CD14-positive monocyte (primary cell): ENCODE measurements at regions of chr16 and their contacts with region 1.

Region 1: DNA sequence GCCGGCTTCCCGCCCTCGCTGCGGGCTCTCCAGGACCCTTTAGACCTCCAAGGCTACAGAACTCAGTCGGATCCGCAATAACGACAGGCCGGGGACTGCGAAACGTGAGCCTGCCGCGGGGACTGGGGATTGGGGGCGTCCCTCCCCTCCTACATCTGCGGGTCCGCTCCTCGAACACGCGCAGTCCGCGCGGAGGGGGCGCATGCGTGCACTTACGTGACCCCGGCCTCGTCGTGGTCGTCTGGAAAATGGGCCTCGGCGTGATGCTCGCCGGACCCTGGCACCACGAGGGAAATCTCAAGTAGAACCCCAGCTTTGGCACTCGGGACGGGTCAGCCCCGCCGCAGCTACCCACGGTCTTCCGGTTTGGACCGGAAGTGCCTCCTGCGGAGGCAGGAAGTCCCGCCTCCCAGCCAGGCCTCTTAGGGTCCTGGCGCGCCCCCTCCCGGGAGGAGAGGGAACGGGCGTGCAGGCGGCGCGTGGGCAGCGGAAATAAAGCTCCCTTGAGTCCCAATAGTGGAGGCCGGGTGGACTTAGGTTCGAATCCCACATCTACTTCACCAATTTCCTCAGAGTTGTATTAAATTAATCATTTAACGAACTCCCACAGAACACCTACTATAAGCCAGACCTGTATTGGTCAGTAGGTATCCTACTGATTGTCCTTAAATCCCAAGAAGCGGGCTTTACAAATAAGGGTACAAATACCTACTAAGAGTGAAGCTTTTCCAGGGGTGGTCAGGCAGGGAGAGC is at the start of gene TAF1C:
- DNase-seq: peak; percentile 94 to 95 (median 95)
- H3K4me3 ChIP-seq: peak within 1 kb of the TSS; percentile 67 to 97 (median 92)
- H3K4me3 Mint-ChIP-seq: peak within 1 kb of the TSS; percentile 89 to 93
- H3K27ac ChIP-seq: peak within 1 kb of the TSS; percentile 55 to 90
- H3K27ac Mint-ChIP-seq: peak within 1 kb of the TSS; percentile 88 to 96 (median 91)
- H3K4me1 ChIP-seq: peaks cover 7 to 11% of the 10 kb centered on the region in 2 donors
- H3K4me1 Mint-ChIP-seq: peaks cover 13% of the 10 kb centered on the region
- H3K27me3 ChIP-seq: no peaks in the 10 kb centered on the region
- H3K27me3 Mint-ChIP-seq: peaks cover 0 to 1% (median 0%) of the 10 kb centered on the region in 3 donors
- CTCF ChIP-seq: peak; percentile 94
- polyA plus RNA-seq, gene TAF1C: 4.0 to 126 (median 4.5) TPM

Region 2: GRCh38 chr16:83967806-83968305 is 219.0 kb before region 1 on chr16 and contains the start of gene NECAB2:
- intact Hi-C with region 1: loop called (anchors 2 to 5 kb)
- DNase-seq: peak; percentile 43 to 64 (median 48)
- H3K4me3 ChIP-seq: no peak within 1 kb of the TSS
- H3K4me3 Mint-ChIP-seq: peak within 1 kb of the TSS; percentile 53 to 82
- H3K27ac ChIP-seq: no peak within 1 kb of the TSS
- H3K27ac Mint-ChIP-seq: peak within 1 kb of the TSS in 1 of 7 donors; percentile 3
- H3K4me1 ChIP-seq: no peaks in the 10 kb centered on the region
- H3K4me1 Mint-ChIP-seq: peaks cover 2% of the 10 kb centered on the region
- H3K27me3 ChIP-seq: peaks cover 6 to 32% of the 10 kb centered on the region in 2 donors
- H3K27me3 Mint-ChIP-seq: peaks cover 28 to 52% (median 40%) of the 10 kb centered on the region in 3 donors
- CTCF ChIP-seq: peak; percentile 78
- polyA plus RNA-seq, gene NECAB2: 0.33 to 1.4 (median 0.52) TPM

Region 3: GRCh38 chr16:84062734-84063640 is 123.9 kb before region 1 on chr16:
- intact Hi-C with region 1: loop called (anchors 5 kb)
- DNase-seq: peak; percentile 51 to 74 (median 51)
- H3K4me3 ChIP-seq: no peak overlapping the region
- H3K4me3 Mint-ChIP-seq: no peak overlapping the region
- H3K27ac ChIP-seq: no peak overlapping the region
- H3K27ac Mint-ChIP-seq: peak overlapping the region in 2 of 7 donors; percentile 46 to 56
- H3K4me1 ChIP-seq: peaks cover under 1 to 3% of the 10 kb centered on the region in 2 donors
- H3K4me1 Mint-ChIP-seq: peaks cover under 1% of the 10 kb centered on the region
- H3K27me3 ChIP-seq: no peaks in the 10 kb centered on the region
- H3K27me3 Mint-ChIP-seq: peaks cover 0 to 1% (median 0%) of the 10 kb centered on the region in 3 donors
- CTCF ChIP-seq: peak; percentile 83

Region 4: GRCh38 chr16:84084570-84085270 is 102.1 kb before region 1 on chr16:
- intact Hi-C with region 1: loop called in 1 of 2 experiments (anchors 5 kb)
- DNase-seq: peak in 2 of 3 donors; percentile 48 to 63
- H3K4me3 ChIP-seq: no peak overlapping the region
- H3K4me3 Mint-ChIP-seq: no peak overlapping the region
- H3K27ac ChIP-seq: peak overlapping the region; percentile 6 to 42
- H3K27ac Mint-ChIP-seq: peak overlapping the region in 3 of 7 donors; percentile 7 to 70 (median 57)
- H3K4me1 ChIP-seq: peaks cover 60 to 67% of the 10 kb centered on the region in 2 donors
- H3K4me1 Mint-ChIP-seq: peaks cover 68% of the 10 kb centered on the region
- H3K27me3 ChIP-seq: no peaks in the 10 kb centered on the region
- H3K27me3 Mint-ChIP-seq: peaks cover 0 to 3% (median 0%) of the 10 kb centered on the region in 3 donors
- CTCF ChIP-seq: peak; percentile 77

Region 5: GRCh38 chr16:84144859-84145639 is 41.8 kb before region 1 on chr16 and contains the starts of genes DNAAF1 and HSDL1:
- intact Hi-C with region 1: loop called (anchors 5 to 10 kb)
- DNase-seq: peak; percentile 83 to 90 (median 83)
- H3K4me3 ChIP-seq: peak within 1 kb of the TSS; percentile 73 to 91 (median 86)
- H3K4me3 Mint-ChIP-seq: peak within 1 kb of the TSS; percentile 90 to 98
- H3K27ac ChIP-seq: peak within 1 kb of the TSS; percentile 25 to 84
- H3K27ac Mint-ChIP-seq: peak within 1 kb of the TSS; percentile 73 to 91 (median 85)
- H3K4me1 ChIP-seq: peaks cover 13 to 16% of the 10 kb centered on the region in 2 donors
- H3K4me1 Mint-ChIP-seq: peaks cover 5% of the 10 kb centered on the region
- H3K27me3 ChIP-seq: peaks cover 0 to 20% of the 10 kb centered on the region in 2 donors
- H3K27me3 Mint-ChIP-seq: peaks cover 9 to 36% (median 22%) of the 10 kb centered on the region in 3 donors
- CTCF ChIP-seq: no peak
- polyA plus RNA-seq, gene DNAAF1: 0.23 to 14.6 TPM in 2 of 3 donors, not detected in the other
- polyA plus RNA-seq, gene HSDL1: 7.3 to 13.3 (median 8.0) TPM

Region 6: DNA sequence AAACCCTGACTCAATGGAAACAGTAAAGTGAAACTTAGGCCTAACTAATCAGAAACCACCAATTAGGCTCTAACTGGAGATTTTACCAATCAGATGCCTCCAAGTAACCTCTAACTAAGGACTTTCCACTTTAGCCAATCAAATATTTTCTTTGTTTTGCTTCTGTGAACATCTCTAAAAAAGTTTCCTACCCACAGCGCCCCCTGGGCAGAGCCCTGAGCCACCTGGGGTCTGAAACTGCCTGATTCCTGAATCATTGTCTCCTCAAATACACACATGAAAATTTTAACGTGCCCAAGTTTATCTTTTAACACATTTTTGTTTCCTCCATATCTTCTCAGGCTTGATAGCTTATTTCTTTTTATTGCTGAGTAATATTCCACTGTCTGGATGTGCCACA is 23.1 kb after region 1 on chr16:
- intact Hi-C with region 1: no loop called
- DNase-seq: no peak
- H3K4me3 ChIP-seq: no peak overlapping the region
- H3K4me3 Mint-ChIP-seq: no peak overlapping the region
- H3K27ac ChIP-seq: no peak overlapping the region
- H3K27ac Mint-ChIP-seq: no peak overlapping the region
- H3K4me1 ChIP-seq: no peaks in the 10 kb centered on the region
- H3K4me1 Mint-ChIP-seq: peaks cover 6% of the 10 kb centered on the region
- H3K27me3 ChIP-seq: no peaks in the 10 kb centered on the region
- H3K27me3 Mint-ChIP-seq: peaks cover 3 to 13% (median 3%) of the 10 kb centered on the region in 3 donors
- CTCF ChIP-seq: no peak

Region 7: DNA sequence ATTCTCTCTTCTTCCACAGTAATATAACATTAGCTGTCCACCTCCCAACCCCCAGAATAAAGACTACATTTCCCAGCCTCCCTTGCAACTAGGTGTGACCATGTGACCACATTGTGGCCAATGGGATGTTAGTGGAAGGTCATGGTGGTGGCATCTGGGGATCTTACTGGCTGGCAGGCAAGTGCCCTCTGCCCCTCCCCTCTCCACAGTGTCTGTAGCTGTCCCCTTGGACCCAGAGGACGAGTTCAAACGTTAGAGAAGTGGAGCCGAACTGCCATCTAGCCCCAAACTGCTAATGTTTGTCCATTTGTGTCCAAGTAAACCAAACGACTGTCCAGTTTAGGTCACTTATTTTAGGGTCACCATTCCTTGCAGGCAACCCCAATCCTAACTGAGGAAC is 79.6 kb after region 1 on chr16:
- intact Hi-C with region 1: no loop called
- DNase-seq: peak; percentile 21 to 58 (median 37)
- H3K4me3 ChIP-seq: no peak overlapping the region
- H3K4me3 Mint-ChIP-seq: no peak overlapping the region
- H3K27ac ChIP-seq: no peak overlapping the region
- H3K27ac Mint-ChIP-seq: peak overlapping the region in 1 of 7 donors; percentile 50
- H3K4me1 ChIP-seq: no peaks in the 10 kb centered on the region
- H3K4me1 Mint-ChIP-seq: no peaks in the 10 kb centered on the region
- H3K27me3 ChIP-seq: no peaks in the 10 kb centered on the region
- H3K27me3 Mint-ChIP-seq: peaks cover 0 to 15% (median 3%) of the 10 kb centered on the region in 3 donors
- CTCF ChIP-seq: no peak

Region 8: DNA sequence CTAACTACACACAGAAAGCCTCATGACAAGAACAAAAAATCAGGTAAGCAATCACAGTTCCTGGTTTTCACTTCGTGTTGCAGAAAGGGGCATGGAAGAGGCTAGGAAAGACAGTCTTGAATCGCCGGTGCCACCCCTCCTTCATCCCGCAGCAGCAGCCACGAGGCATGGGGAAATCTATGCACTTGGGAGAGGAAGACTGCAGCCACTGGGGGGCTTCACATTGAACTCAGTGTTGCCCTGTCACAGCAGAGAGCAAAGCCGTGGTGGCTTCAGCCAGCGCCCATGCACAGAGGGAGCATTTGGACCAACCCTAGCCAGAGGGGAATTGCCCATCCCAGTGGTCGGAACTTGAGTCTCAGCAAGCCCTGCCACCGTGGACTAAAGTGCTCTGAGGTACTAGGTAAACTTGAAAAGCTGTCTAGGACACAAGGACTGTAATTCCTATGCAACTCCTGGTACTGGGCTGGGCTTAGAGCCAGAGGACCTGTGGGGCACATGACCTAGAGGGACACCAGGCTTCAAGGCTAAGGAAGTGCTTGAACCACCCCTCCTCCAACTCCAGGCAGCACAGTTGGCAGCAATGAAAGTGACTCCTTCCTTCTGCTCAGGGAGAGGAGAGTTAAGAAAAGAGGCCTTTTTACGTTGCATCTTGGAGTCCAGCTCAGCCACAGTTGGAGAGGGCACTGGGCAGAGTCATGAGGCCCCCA is 146.3 kb after region 1 on chr16:
- intact Hi-C with region 1: no loop called
- DNase-seq: no peak
- H3K4me3 ChIP-seq: no peak overlapping the region
- H3K4me3 Mint-ChIP-seq: no peak overlapping the region
- H3K27ac ChIP-seq: no peak overlapping the region
- H3K27ac Mint-ChIP-seq: no peak overlapping the region
- H3K4me1 ChIP-seq: no peaks in the 10 kb centered on the region
- H3K4me1 Mint-ChIP-seq: no peaks in the 10 kb centered on the region
- H3K27me3 ChIP-seq: no peaks in the 10 kb centered on the region
- H3K27me3 Mint-ChIP-seq: peaks cover 3 to 10% (median 3%) of the 10 kb centered on the region in 3 donors
- CTCF ChIP-seq: no peak